Activated CD4-positive, alpha-beta T cell treated with anti-CD3 and anti-CD28 coated beads, Interleukin-2, amount 10 ng/mL, durations not matched to agents 24 days and 14 days (primary cell): ENCODE measurements at regions of chr2 and their contacts with region 1.

Region 1: GRCh38 chr2:171160119-171160955 is at the start of gene TLK1:
- DNase-seq: peak; percentile 93
- H3K4me3 Mint-ChIP-seq: peak within 1 kb of the TSS; percentile 92
- H3K27ac Mint-ChIP-seq: peak within 1 kb of the TSS; percentile 98
- H3K4me1 Mint-ChIP-seq: peaks cover 49% of the 10 kb centered on the region
- H3K27me3 Mint-ChIP-seq: no peaks in the 10 kb centered on the region
- total RNA-seq, gene TLK1: 91.8 and 94.9 TPM in 2 replicates

Region 2: GRCh38 chr2:170361090-170361936 is 799.0 kb before region 1 on chr2:
- intact Hi-C with region 1: loop called (anchors 2 kb)
- DNase-seq: peak; percentile 87
- H3K4me3 Mint-ChIP-seq: peak overlapping the region; percentile 40
- H3K27ac Mint-ChIP-seq: peak overlapping the region; percentile 97
- H3K4me1 Mint-ChIP-seq: peaks cover 38% of the 10 kb centered on the region
- H3K27me3 Mint-ChIP-seq: peaks cover 4% of the 10 kb centered on the region

Region 3: DNA sequence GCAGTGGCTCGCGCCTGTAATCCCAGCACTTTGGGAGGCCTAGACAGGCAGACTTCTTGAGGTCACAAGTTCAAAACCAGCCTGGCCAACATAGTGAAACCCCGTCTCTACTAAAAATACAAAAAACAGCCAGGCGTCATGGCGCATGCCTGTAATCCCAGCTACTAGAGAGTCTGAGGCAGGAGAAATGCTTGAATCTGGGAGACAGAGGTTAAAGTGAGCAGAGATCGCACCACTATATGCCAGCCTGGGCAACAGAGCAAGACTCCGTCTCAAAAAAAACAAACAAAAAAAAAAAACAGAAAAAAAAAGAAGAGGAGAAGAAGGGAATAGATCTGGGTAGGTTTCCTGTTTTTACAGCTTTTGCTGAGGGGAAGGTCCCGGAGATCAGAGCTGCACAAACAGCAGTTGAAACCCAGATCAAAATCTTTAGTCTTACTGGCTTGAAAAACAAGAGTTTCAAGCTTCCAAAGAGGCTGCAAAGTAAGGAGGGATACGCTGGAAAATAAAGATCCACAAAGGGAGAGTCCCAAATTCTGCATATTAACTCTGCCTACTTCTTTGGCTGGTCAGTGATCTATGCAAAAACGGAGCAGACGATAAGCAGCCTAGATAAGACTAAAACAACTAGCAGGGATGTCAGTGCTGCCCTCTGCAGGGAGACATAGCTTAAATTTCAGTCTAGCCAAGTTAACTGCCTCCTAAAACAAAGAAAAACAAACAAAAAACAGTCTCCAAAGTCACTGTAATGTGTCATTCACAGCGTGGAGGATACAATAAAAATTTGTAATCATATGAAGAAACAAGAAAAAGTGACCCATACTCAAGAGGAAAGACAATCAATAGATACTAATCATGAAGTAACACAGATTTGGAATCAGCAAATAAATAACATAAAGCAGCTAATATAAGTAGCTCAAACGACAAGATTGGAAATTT is 73.7 kb before region 1 on chr2:
- intact Hi-C with region 1: loop called (anchors 1 kb)
- DNase-seq: peak; percentile 84
- H3K4me3 Mint-ChIP-seq: peak overlapping the region; percentile 83
- H3K27ac Mint-ChIP-seq: peak overlapping the region; percentile 87
- H3K4me1 Mint-ChIP-seq: peaks cover 53% of the 10 kb centered on the region
- H3K27me3 Mint-ChIP-seq: no peaks in the 10 kb centered on the region

Region 4: GRCh38 chr2:171173089-171173488 is 12.8 kb after region 1 on chr2:
- intact Hi-C with region 1: loop called (anchors 1 kb)
- DNase-seq: no peak
- H3K4me3 Mint-ChIP-seq: no peak overlapping the region
- H3K27ac Mint-ChIP-seq: no peak overlapping the region
- H3K4me1 Mint-ChIP-seq: peaks cover 4% of the 10 kb centered on the region
- H3K27me3 Mint-ChIP-seq: peaks cover 5% of the 10 kb centered on the region

Region 5: DNA sequence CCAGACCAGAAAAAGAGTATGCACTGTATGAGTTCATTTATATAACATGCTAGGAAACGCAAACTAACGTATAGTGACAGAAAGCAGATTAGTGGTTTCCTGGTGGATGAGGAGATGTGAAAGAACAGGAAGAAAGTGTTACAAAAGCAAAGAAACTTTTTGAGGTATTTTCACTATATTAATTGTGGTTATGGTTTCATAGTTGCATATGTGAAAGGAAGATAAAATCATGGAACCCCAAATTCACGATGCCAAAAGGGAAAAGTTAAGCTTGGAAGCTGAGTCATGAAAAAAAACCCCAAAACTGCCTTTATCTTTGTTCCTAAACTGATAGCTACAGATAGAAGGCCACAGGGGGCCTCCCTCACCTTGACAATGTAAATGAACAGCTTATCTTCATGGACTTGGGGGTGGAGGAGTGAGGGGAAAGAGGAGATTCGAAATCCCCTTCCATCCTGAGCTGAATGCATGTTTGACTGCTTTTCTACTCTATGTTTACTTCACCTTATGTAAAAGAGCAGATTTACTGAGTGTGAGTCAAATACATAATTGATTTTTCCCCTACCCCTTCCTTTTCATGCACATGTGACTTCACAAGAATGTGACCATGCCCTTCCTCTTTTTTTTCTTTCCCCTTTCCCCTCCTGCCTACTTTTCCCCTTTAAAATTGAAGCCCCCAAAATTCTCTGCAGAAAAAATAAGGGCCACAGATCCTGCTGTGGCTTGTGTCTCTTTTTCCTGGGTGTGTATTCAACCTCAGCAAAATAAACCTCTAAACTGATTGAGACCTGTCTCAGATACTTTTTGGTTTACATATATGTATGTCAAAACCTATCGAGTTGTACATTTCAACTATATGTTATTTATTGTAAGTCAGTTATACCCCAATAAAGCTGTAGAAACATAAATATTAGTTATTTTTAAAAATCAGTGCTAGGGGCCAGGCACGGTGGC is 100.4 kb after region 1 on chr2:
- intact Hi-C with region 1: loop called (anchors 1 kb)
- DNase-seq: peak; percentile 62
- H3K4me3 Mint-ChIP-seq: peak overlapping the region; percentile 10
- H3K27ac Mint-ChIP-seq: peak overlapping the region; percentile 83
- H3K4me1 Mint-ChIP-seq: peaks cover 28% of the 10 kb centered on the region
- H3K27me3 Mint-ChIP-seq: no peaks in the 10 kb centered on the region

Region 6: DNA sequence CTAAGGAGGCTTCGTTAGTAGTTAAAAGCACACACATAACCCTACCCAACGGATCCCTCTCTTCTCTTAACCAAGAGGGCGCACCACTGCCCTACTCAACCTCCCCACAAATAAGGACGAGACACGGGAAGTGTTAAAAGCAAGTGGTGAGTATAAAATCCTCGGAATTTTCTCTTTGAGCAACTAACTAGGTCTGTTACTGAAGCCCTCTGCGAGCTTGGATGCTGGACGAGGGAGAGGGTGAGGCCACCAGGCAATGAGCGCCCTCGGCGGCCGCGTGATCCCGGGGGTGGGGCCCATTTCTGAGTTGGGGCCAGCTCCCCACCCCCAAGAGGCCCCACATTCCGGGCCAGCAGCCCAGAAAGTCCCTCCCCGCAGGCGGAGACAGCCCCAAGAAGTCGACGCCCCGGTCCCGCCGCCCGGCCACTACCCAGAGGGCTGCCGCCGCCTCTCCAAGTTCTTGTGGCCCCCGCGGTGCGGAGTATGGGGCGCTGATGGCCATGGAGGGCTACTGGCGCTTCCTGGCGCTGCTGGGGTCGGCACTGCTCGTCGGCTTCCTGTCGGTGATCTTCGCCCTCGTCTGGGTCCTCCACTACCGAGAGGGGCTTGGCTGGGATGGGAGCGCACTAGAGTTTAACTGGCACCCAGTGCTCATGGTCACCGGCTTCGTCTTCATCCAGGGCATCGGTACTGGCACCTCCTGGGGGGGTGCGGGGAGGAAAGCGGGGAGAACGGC is 361.9 kb after region 1 on chr2 and contains the start of gene CYBRD1:
- intact Hi-C with region 1: loop called (anchors 5 kb)
- DNase-seq: peak; percentile 71
- H3K4me3 Mint-ChIP-seq: peak within 1 kb of the TSS; percentile 88
- H3K27ac Mint-ChIP-seq: peak within 1 kb of the TSS; percentile 78
- H3K4me1 Mint-ChIP-seq: peaks cover 7% of the 10 kb centered on the region
- H3K27me3 Mint-ChIP-seq: peaks cover 46% of the 10 kb centered on the region
- total RNA-seq, gene CYBRD1: 4.7 and 5.1 TPM in 2 replicates